Activated CD4-positive, alpha-beta T cell treated with anti-CD3 and anti-CD28 coated beads, Interleukin-2, amount 10 ng/mL, durations not matched to agents 24 days and 14 days (primary cell): ENCODE measurements at regions of chr2 and their contacts with region 1.

Region 1: GRCh38 chr2:84495539-84496146 is 20.7 kb upstream of the DNAH6 start:
- DNase-seq: peak; percentile 84
- H3K4me3 Mint-ChIP-seq: no peak overlapping the region
- H3K27ac Mint-ChIP-seq: no peak overlapping the region
- H3K4me1 Mint-ChIP-seq: peaks cover 10% of the 10 kb centered on the region
- H3K27me3 Mint-ChIP-seq: peaks cover 8% of the 10 kb centered on the region

Region 2: DNA sequence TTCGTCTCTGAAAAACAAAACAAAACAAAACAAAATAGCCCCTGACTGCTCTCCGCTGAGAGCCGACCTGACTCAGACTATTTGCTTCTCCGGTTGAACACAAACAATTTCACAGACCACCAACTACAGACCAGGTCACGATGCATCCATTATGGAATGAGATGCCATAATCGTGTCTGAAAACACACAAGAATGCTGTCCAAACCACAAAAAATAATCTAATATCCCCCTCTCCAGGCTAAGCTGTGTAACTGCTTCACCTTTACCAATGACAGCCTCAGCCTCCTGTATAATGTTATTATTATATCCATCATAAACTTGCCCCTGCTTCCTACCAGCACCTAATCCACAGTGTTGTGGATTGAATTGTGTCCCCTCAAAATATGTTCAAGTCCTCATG is 135.4 kb after region 1 on chr2:
- intact Hi-C with region 1: loop called (anchors 1 kb)
- DNase-seq: peak; percentile 61
- H3K4me3 Mint-ChIP-seq: no peak overlapping the region
- H3K27ac Mint-ChIP-seq: no peak overlapping the region
- H3K4me1 Mint-ChIP-seq: peaks cover 4% of the 10 kb centered on the region
- H3K27me3 Mint-ChIP-seq: peaks cover 2% of the 10 kb centered on the region

Region 3: DNA sequence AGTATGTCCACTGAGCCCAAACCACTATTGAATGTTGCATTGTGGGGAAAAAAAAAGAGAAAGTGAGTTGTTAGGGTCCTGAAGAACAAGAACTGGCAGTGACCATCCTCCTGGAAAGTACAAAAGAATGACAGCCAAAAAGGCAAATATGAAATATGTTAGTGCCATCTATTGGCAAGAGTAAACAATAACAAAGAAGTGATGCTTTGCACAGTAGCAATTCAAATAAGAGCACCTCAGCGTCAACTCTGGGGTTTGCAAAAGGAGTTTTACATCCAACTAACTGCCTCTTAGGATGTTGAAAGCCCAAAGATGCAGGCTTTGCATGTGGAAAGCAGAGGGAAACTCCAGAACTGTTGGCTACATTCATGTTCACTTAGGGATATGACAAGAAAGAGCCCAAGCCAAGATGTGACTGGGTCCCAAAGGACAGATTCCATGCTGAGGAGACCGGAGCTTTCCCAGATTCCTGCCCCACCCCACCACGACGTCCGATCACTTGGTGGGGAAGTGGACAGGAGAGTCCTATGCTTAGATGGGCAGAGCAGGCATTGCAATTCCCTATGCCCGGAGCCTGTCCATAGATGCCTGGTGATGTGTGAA is 369.6 kb after region 1 on chr2:
- intact Hi-C with region 1: loop called (anchors 1 kb)
- DNase-seq: peak; percentile 72
- H3K4me3 Mint-ChIP-seq: no peak overlapping the region
- H3K27ac Mint-ChIP-seq: peak overlapping the region; percentile 45
- H3K4me1 Mint-ChIP-seq: peaks cover 55% of the 10 kb centered on the region
- H3K27me3 Mint-ChIP-seq: no peaks in the 10 kb centered on the region